Common myeloid progenitor, CD34-positive (primary cell): ENCODE measurements at regions of chr16 and their contacts with region 1.

Region 1: DNA sequence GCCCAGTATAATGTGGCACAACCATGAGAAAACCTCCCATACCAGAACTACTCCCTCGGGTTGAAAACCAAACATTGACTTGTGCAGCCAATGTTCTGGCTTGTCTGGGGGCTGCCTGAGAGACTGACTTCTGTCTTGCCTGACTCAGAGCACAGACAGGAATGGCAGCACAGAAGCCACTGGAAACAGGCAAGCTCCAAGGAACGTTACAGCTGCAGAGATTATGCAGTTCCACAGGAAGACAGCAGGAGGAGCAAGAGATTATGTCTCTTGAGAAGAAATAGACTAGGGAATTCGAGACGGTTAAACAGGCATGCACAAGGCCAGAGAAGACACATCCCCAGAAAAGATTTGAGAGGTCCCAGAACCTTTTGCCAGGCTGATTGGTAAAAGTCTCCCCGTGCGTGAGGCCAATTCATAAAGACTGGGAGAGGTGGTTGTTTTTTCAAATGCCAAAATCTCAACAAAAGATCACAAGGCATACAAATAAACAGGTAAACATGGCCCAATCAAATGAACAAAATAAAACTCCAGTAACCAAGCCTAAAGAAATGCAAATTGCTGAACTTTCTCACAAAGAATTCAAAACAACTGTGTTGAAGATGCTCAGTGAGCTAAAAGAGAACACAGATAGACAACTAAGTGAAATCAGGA is 90.6 kb upstream of the CDH5 start:
- DNase-seq: peak; percentile 27 to 52 (median 35)
- H3K4me3 ChIP-seq: no peak overlapping the region
- H3K27ac ChIP-seq: no peak overlapping the region
- H3K4me1 ChIP-seq: no peaks in the 10 kb centered on the region
- H3K27me3 ChIP-seq: peaks cover 0 to 10% (median 6%) of the 10 kb centered on the region in 5 experiments

Region 2: DNA sequence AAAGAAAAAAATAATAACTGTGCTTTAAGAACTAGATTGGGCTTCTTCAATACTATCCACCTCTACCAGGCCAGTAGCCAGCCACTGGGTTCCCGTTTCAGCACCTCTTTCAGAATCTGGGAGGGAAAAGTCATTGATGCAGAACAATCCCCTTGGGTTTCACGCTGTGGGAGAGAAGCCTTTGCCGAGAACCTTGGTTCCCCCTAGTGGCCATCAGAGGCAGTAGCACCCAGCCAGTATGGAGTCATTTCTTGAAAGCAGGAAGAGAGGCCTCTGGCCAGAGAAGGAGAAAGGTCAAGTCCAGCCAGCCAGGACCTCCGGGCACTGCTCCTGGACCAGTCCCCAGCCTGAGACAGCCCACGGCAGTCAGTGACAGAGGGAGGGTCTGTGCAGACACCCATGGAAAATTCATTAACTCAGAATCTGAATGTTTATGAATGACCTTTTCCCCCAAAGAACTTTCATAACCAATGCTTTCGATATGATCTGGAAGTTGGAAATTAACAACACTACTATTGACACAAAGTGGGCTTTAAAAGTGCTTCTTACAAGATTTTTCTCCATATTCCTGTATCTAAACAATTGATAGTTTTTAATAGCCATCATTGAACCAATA is 39.4 kb after region 1 on chr16:
- CTCF ChIA-PET with region 1: interaction called, 10 read pairs
- POLR2A ChIA-PET with region 1: no interaction called
- DNase-seq: peak; percentile 53 to 75 (median 67)
- H3K4me3 ChIP-seq: no peak overlapping the region
- H3K27ac ChIP-seq: no peak overlapping the region
- H3K4me1 ChIP-seq: no peaks in the 10 kb centered on the region
- H3K27me3 ChIP-seq: peaks cover 0 to 3% (median 0%) of the 10 kb centered on the region in 5 experiments